BJ (cell line): ENCODE measurements at regions of chr5 and their contacts with region 1.

Region 1: GRCh38 chr5:138595180-138595795 is 20.1 kb upstream of the HSPA9 start:
- DNase-seq: no peak
- H3K4me3 ChIP-seq: no peak overlapping the region
- H3K27me3 ChIP-seq: peaks cover 3% of the 10 kb centered on the region; the same call in 1 of the 2 replicates
- CTCF ChIP-seq: no peak

Region 2: DNA sequence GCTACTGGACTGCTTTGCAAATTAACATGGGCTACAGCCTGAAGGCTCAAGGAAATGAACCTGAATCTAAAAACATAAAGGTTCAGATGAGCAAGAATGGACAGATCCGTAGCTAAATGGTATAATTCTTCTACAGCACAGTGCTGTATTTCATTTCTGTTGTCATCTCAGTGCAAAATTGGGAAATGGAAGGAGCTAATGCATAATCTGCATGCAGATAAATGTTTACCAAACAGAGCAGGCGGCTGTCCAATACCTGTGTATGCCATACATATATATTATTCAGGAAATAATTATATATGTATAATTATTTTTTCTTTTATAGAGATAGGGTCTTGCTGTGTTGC is 15.8 kb before region 1 on chr5:
- CTCF ChIA-PET with region 1: interaction called, 10 read pairs
- POLR2A ChIA-PET with region 1: no interaction called
- DNase-seq: no peak
- H3K4me3 ChIP-seq: no peak overlapping the region
- H3K27me3 ChIP-seq: no peaks in the 10 kb centered on the region
- CTCF ChIP-seq: no peak